ENCODE measurements at regions of chr7 and their contacts with region 1.

Region 1: GRCh38 chr7:105759670-105760550 is 116.5 kb downstream of the ATXN7L1 start:
- DNase-seq: no peak
- H3K4me3 Mint-ChIP-seq: no peak overlapping the region
- H3K27ac Mint-ChIP-seq: no peak overlapping the region
- H3K4me1 Mint-ChIP-seq: peaks cover 27% of the 10 kb centered on the region
- H3K27me3 Mint-ChIP-seq: no peaks in the 10 kb centered on the region

Region 2: GRCh38 chr7:105594034-105594433 is 165.9 kb before region 1 on chr7:
- CTCF ChIA-PET with region 1: no interaction called
- POLR2A ChIA-PET with region 1: no interaction called
- intact Hi-C with region 1: no loop called
- DNase-seq: no peak
- H3K4me3 Mint-ChIP-seq: no peak overlapping the region
- H3K27ac Mint-ChIP-seq: no peak overlapping the region
- H3K4me1 Mint-ChIP-seq: peaks cover 5% of the 10 kb centered on the region
- H3K27me3 Mint-ChIP-seq: no peaks in the 10 kb centered on the region

Region 3: GRCh38 chr7:105652359-105652993 is 107.4 kb before region 1 on chr7:
- CTCF ChIA-PET with region 1: interaction called, 25 read pairs
- POLR2A ChIA-PET with region 1: no interaction called
- intact Hi-C with region 1: loop called (anchors 1 kb)
- DNase-seq: peak; percentile 75
- H3K4me3 Mint-ChIP-seq: no peak overlapping the region
- H3K27ac Mint-ChIP-seq: no peak overlapping the region
- H3K4me1 Mint-ChIP-seq: peaks cover 10% of the 10 kb centered on the region
- H3K27me3 Mint-ChIP-seq: no peaks in the 10 kb centered on the region

Region 4: DNA sequence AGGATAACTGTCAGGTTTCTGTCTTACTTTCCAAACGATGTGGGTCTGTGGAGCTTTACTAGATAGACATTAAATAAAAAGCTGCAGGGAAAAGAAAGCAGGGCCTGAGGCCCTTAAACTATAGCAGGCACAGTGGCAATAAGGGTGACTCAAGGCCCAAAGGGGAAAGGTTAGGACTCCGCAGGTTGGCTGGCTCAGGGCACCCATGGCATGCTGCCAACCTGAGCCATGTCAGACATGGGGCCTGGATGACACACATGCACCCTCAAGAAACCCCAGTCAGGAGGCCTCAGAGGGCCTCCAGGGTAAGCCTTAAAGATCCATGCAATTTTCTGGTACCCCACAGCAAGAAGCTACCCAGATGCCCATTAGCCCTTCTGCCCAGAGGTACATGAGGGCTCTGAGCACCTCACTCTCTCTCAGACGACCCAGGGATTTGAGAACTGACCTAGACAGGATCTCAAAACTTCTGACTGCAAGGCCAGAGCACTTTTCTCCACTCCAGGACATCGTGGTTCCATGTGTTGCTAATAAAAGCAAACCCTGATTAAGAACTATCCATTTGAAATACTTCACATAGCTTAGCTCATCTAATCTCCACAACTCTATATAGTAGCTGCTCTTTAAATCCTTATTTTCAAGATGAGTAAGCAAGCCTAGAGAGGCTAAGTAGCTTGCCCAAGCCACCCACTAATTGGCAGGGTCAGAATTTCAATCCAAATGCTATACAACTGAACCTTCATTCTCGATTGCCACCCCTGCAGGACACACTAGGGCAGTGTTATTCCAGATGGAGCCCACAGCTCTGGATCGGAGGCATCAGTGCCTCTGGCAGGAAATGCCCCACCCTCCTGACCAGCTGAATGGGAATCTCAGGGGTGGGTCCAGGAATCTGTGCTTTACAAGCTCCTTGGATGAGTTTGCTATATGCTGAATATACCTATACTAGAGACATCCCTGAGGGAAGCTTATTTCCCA is 46.1 kb before region 1 on chr7:
- CTCF ChIA-PET with region 1: no interaction called
- POLR2A ChIA-PET with region 1: no interaction called
- intact Hi-C with region 1: no loop called
- DNase-seq: no peak
- H3K4me3 Mint-ChIP-seq: no peak overlapping the region
- H3K27ac Mint-ChIP-seq: no peak overlapping the region
- H3K4me1 Mint-ChIP-seq: peaks cover 6% of the 10 kb centered on the region
- H3K27me3 Mint-ChIP-seq: no peaks in the 10 kb centered on the region

Region 5: DNA sequence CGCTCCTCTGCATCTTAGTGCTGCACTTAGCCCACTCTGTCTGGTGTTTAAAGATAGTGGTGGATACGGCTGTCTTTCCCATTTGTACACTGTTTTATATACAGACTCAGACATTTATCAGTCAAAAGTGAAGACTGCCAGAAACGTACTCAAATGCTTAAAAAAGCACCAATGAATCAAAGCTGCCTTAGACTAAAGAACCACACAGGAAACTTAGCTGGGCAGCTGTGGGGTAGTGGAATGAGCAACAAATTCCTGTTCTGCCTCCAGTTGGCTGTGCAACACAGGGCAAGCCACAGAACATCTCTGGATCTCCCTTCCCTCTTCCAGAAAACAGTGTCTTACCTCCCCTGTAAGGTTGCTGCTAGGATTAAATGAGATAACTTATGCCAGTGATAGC is 40.5 kb after region 1 on chr7:
- CTCF ChIA-PET with region 1: interaction called, 12 read pairs
- POLR2A ChIA-PET with region 1: no interaction called
- intact Hi-C with region 1: no loop called
- DNase-seq: peak; percentile 76
- H3K4me3 Mint-ChIP-seq: no peak overlapping the region
- H3K27ac Mint-ChIP-seq: no peak overlapping the region
- H3K4me1 Mint-ChIP-seq: peaks cover 32% of the 10 kb centered on the region
- H3K27me3 Mint-ChIP-seq: no peaks in the 10 kb centered on the region

Region 6: DNA sequence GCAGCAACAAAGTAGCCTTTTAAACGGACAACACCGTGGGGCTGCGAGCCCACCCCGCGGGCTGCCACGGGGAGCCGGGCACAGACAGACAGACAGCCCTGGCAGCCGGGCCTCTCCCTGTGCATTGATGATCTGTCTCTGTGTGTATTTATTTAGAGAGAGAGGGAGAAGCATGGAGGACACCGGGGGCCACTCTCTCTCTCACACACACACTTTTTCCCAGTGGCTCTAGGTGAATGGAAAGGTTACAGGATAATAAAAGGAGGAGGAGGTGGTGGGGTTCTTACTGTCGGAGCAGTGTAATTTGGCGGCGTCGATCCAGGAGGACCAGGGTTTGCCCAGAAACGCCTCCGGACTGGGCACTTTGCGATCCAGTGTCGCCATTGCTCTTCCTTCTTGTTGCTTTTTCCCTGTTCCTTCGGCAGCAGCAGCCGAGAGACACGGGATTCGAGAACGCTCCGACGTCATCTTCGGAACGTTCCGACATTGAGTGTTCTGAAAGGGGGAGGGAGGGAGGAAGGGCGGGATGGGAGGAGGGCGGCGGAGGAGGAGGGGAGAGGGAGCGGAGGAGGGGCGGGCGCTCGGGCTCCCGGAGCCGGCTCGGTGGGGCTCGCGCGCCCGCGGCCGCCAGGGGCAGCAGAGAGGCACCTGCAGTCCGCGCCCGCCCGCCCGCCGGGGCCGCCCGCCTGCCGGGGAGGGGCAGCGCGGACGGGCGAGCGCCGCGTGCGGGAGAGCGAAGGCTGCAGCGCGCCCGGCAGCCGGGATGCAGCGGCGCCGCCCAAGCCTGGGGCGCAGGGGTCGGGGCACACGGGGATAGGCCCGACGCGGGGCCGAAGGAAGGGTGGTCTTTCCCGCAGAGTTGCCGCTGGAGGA is 116.4 kb after region 1 on chr7 and contains the start of gene ATXN7L1:
- CTCF ChIA-PET with region 1: interaction called, 25 read pairs
- POLR2A ChIA-PET with region 1: no interaction called
- intact Hi-C with region 1: no loop called
- DNase-seq: peak; percentile 93
- H3K4me3 Mint-ChIP-seq: peak within 1 kb of the TSS; percentile 88
- H3K27ac Mint-ChIP-seq: peak within 1 kb of the TSS; percentile 79
- H3K4me1 Mint-ChIP-seq: peaks cover 48% of the 10 kb centered on the region
- H3K27me3 Mint-ChIP-seq: no peaks in the 10 kb centered on the region
- total RNA-seq, gene ATXN7L1: 12.4 to 13.3 TPM

Region 7: GRCh38 chr7:105924945-105925344 is 165.0 kb after region 1 on chr7:
- CTCF ChIA-PET with region 1: interaction called, 14 read pairs
- POLR2A ChIA-PET with region 1: interaction called, 6 read pairs
- intact Hi-C with region 1: no loop called
- DNase-seq: peak; percentile 50
- H3K4me3 Mint-ChIP-seq: no peak overlapping the region
- H3K27ac Mint-ChIP-seq: peak overlapping the region; percentile 53
- H3K4me1 Mint-ChIP-seq: peaks cover 30% of the 10 kb centered on the region
- H3K27me3 Mint-ChIP-seq: peaks cover 2% of the 10 kb centered on the region

Region 8: GRCh38 chr7:106041140-106041717 is 281.3 kb after region 1 on chr7:
- CTCF ChIA-PET with region 1: interaction called, 149 read pairs
- POLR2A ChIA-PET with region 1: no interaction called
- intact Hi-C with region 1: loop called (anchors 1 kb)
- DNase-seq: peak; percentile 52
- H3K4me3 Mint-ChIP-seq: no peak overlapping the region
- H3K27ac Mint-ChIP-seq: no peak overlapping the region
- H3K4me1 Mint-ChIP-seq: peaks cover 23% of the 10 kb centered on the region
- H3K27me3 Mint-ChIP-seq: peaks cover 2% of the 10 kb centered on the region

Region 9: DNA sequence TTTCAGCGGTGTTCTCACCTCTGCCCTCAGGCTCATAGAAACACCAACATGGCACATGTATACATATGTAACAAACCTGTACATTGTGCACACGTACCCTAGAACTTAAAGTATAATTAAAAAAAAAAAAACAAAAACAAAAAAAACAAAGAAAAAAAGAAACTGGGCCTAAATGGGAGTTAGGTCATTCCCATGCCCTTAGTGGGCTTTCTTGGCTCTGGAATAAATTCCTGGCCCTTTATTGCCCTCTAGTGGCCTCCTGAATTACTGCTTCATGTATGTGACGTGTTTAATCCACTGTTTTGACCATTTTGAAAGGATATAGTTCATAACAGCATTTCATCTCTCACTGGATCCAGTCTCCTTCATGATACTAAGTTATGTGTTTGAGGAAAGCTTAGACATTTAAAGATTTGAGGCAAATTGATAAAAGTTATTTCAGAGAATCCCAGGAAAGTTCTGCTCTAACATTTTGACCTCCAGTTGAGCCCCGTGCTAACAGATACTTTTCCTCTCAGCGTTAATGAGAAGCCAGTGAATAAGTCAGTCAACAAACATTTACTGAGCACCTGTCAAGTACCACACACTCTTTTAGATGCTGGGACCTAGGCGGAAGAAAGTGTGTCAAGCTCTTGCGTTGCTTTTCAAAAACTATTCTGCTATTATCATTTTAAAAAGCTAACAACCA is 406.9 kb after region 1 on chr7:
- CTCF ChIA-PET with region 1: no interaction called
- POLR2A ChIA-PET with region 1: no interaction called
- intact Hi-C with region 1: loop called (anchors 5 kb)
- DNase-seq: peak; percentile 21
- H3K4me3 Mint-ChIP-seq: no peak overlapping the region
- H3K27ac Mint-ChIP-seq: peak overlapping the region; percentile 24
- H3K4me1 Mint-ChIP-seq: peaks cover 3% of the 10 kb centered on the region
- H3K27me3 Mint-ChIP-seq: peaks cover 10% of the 10 kb centered on the region